Naive thymus-derived CD4-positive, alpha-beta T cell (primary cell): ENCODE measurements at regions of chr19 and their contacts with region 1.

Region 1: GRCh38 chr19:50461066-50461875 is 15.0 kb upstream of the EMC10 start:
- DNase-seq: peak in 8 of 9 donors; percentile 23 to 68 (median 46)
- ATAC-seq: peak; percentile 87
- H3K4me3 ChIP-seq: no peak overlapping the region
- H3K4me3 Mint-ChIP-seq: no peak overlapping the region
- H3K27ac ChIP-seq: no peak overlapping the region
- H3K27ac Mint-ChIP-seq: peak overlapping the region in 1 of 9 donors; percentile 52
- H3K4me1 ChIP-seq: peaks cover 0 to 5% of the 10 kb centered on the region in 2 donors
- H3K4me1 Mint-ChIP-seq: peaks cover 0 to 14% (median 4%) of the 10 kb centered on the region in 7 donors
- H3K27me3 ChIP-seq: peaks cover 0 to 6% of the 10 kb centered on the region in 2 donors
- H3K27me3 Mint-ChIP-seq: peaks cover 10 to 44% (median 21%) of the 10 kb centered on the region in 5 donors

Region 2: DNA sequence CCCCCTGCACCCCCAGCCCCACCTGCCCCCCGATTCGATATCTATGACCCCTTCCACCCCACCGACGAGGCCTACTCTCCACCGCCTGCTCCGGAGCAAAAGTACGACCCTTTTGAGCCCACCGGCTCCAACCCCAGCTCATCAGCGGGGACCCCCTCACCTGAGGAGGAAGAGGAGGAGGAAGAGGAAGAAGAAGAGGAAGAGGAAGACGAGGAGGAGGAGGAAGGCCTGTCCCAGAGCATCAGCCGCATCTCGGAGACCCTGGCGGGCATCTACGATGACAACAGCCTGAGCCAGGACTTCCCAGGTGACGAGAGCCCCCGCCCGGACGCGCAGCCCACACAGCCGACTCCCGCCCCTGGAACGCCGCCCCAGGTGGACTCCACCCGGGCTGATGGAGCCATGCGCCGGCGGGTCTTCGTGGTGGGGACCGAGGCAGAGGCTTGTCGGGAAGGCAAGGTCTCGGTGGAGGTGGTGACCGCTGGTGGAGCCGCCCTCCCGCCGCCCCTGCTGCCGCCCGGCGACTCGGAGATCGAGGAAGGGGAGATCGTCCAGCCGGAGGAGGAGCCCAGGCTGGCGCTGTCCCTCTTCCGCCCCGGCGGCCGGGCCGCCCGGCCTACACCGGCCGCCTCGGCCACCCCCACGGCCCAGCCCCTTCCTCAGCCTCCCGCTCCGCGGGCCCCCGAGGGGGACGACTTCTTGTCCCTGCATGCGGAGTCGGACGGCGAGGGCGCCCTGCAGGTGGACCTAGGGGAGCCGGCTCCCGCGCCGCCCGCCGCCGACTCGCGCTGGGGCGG is 810.0 kb before region 1 on chr19:
- CTCF ChIA-PET with region 1: no interaction called
- POLR2A ChIA-PET with region 1: no interaction called
- intact Hi-C with region 1: no loop called
- DNase-seq: no peak
- ATAC-seq: no peak
- H3K4me3 ChIP-seq: no peak overlapping the region
- H3K4me3 Mint-ChIP-seq: no peak overlapping the region
- H3K27ac ChIP-seq: no peak overlapping the region
- H3K27ac Mint-ChIP-seq: peak overlapping the region in 1 of 9 donors; percentile 75
- H3K4me1 ChIP-seq: no peaks in the 10 kb centered on the region
- H3K4me1 Mint-ChIP-seq: peaks cover 0 to 9% (median 6%) of the 10 kb centered on the region in 7 donors
- H3K27me3 ChIP-seq: no peaks in the 10 kb centered on the region
- H3K27me3 Mint-ChIP-seq: no peaks in the 10 kb centered on the region

Region 3: GRCh38 chr19:50368649-50369570 is 92.4 kb before region 1 on chr19:
- CTCF ChIA-PET with region 1: interaction called, 10 read pairs
- POLR2A ChIA-PET with region 1: interaction called, 3 read pairs
- intact Hi-C with region 1: loop called in 1 of 2 experiments (anchors 1 kb)
- DNase-seq: peak; percentile 56 to 83 (median 74)
- ATAC-seq: peak; percentile 91
- H3K4me3 ChIP-seq: peak overlapping the region; percentile 69
- H3K4me3 Mint-ChIP-seq: peak overlapping the region; percentile 68 to 97 (median 93)
- H3K27ac ChIP-seq: peak overlapping the region; percentile 78
- H3K27ac Mint-ChIP-seq: peak overlapping the region; percentile 60 to 97 (median 91)
- H3K4me1 ChIP-seq: peaks cover under 1 to 4% of the 10 kb centered on the region in 2 donors
- H3K4me1 Mint-ChIP-seq: peaks cover 8 to 45% (median 36%) of the 10 kb centered on the region in 7 donors
- H3K27me3 ChIP-seq: no peaks in the 10 kb centered on the region
- H3K27me3 Mint-ChIP-seq: no peaks in the 10 kb centered on the region

Region 4: DNA sequence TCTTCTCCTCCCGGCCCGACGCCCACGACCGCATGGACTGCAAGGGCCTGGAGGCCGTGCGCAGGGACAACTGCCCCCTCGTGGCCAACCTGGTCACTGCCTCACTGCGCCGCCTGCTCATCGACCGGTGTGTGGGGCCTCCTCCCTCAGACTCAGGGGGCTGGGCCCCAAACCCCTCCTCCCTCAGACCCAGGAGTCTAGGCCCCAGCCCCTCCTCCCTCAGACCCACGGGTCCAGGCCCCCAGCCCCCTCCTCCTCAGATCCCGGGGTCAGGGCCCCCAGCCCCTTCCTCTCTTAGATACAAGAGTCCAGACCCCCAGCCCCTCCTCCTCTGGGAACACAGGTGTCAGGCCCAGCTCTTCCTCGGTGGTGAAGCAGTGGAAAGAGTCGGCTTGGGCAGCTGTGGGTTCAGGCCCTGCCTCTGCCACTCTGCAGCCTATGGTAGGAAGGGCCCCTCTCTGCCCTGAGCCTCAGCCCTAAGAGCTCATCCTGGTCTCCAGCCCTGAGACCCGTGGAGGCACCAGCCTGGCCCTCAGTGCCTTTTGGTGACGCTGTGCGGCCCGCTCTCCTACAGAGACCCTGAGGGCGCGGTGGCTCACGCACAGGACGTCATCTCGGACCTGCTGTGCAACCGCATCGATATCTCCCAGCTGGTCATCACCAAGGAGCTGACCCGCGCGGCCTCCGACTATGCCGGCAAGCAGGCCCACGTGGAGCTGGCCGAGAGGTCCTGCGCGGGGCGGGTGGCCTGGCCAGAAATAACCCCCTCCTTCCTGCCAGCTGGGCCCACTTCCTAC is 46.2 kb before region 1 on chr19:
- CTCF ChIA-PET with region 1: no interaction called
- POLR2A ChIA-PET with region 1: no interaction called
- intact Hi-C with region 1: loop called in 1 of 2 experiments (anchors 5 kb)
- DNase-seq: peak; percentile 45 to 79 (median 66)
- ATAC-seq: peak; percentile 85
- H3K4me3 ChIP-seq: no peak overlapping the region
- H3K4me3 Mint-ChIP-seq: no peak overlapping the region
- H3K27ac ChIP-seq: no peak overlapping the region
- H3K27ac Mint-ChIP-seq: no peak overlapping the region
- H3K4me1 ChIP-seq: no peaks in the 10 kb centered on the region
- H3K4me1 Mint-ChIP-seq: peaks cover 8 to 15% (median 9%) of the 10 kb centered on the region in 7 donors
- H3K27me3 ChIP-seq: no peaks in the 10 kb centered on the region
- H3K27me3 Mint-ChIP-seq: peaks cover 8 to 17% (median 11%) of the 10 kb centered on the region in 5 donors

Region 5: DNA sequence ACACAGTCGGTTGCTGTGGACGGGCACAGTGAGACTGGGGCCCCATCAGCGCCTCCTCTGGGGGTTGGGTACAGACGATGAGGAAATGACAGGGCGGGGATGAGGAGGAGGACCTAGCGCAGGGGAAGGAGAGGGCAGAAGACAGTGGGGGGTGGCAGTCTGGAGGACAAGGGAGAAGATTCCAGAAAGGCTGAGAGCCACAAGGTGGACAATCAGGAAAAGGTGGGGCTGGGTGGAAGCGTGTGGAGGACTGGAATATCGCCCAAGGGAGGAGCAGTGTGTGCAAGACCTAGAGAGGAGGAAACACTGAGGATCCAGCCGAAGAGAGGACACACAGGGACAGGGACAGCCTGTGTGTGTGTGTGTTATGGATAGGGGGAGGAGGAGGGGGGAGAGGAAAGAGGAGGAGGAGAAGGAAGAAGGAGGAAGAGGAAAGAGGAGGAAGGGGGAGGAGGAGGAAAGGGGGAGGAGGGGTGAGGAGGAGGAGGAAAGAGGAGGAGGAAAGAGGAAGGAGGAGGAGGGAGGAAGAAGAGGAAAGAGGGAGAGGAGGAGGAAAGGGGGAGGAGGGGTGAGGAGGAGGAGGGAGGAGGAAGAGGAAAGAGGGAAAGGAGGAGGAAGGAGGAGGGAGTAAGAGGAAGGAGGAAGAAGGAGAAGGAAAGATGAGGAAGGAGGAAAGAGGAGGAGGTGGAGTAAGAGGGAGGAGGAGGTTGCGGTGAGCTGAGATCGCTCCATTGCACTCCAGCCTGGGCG is 31.2 kb after region 1 on chr19:
- CTCF ChIA-PET with region 1: no interaction called
- POLR2A ChIA-PET with region 1: no interaction called
- intact Hi-C with region 1: loop called in 1 of 2 experiments (anchors 1 kb)
- DNase-seq: peak in 2 of 9 donors; percentile 30 to 40
- ATAC-seq: peak; percentile 89
- H3K4me3 ChIP-seq: no peak overlapping the region
- H3K4me3 Mint-ChIP-seq: peak overlapping the region; percentile 27 to 87 (median 58)
- H3K27ac ChIP-seq: no peak overlapping the region
- H3K27ac Mint-ChIP-seq: peak overlapping the region in 6 of 9 donors; percentile 16 to 84 (median 61)
- H3K4me1 ChIP-seq: peaks cover 0 to 13% of the 10 kb centered on the region in 2 donors
- H3K4me1 Mint-ChIP-seq: peaks cover 12 to 36% (median 33%) of the 10 kb centered on the region in 7 donors
- H3K27me3 ChIP-seq: no peaks in the 10 kb centered on the region
- H3K27me3 Mint-ChIP-seq: peaks cover 0 to 8% (median 0%) of the 10 kb centered on the region in 5 donors